CD4-positive, alpha-beta T cell (primary cell): ENCODE measurements at regions of chrX and their contacts with region 1.

Region 1: GRCh38 chrX:14029425-14030173 is at the start of gene GEMIN8:
- DNase-seq: peak; percentile 73 to 94 (median 84)
- ATAC-seq: peak; percentile 85
- H3K4me3 ChIP-seq: peak within 1 kb of the TSS; percentile 82
- H3K4me3 Mint-ChIP-seq: peak within 1 kb of the TSS; percentile 99
- H3K27ac ChIP-seq: peak within 1 kb of the TSS; percentile 82 to 93
- H3K27ac Mint-ChIP-seq: peak within 1 kb of the TSS; percentile 97
- H3K4me1 ChIP-seq: peaks cover 29% of the 10 kb centered on the region
- H3K4me1 Mint-ChIP-seq: peaks cover 52% of the 10 kb centered on the region
- H3K27me3 ChIP-seq: no peaks in the 10 kb centered on the region
- H3K27me3 Mint-ChIP-seq: no peaks in the 10 kb centered on the region
- CTCF ChIP-seq: no peak
- total RNA-seq, gene GEMIN8: 10.2 to 11.1 TPM

Region 2: GRCh38 chrX:12814420-12814819 is 1215.2 kb before region 1 on chrX:
- CTCF ChIA-PET with region 1: interaction called, 3 read pairs
- POLR2A ChIA-PET with region 1: no interaction called
- intact Hi-C with region 1: loop called in 1 of 2 experiments (anchors 5 kb)
- DNase-seq: peak in 13 of 14 experiments; percentile 5 to 67 (median 26)
- ATAC-seq: peak; percentile 63
- H3K4me3 ChIP-seq: no peak overlapping the region
- H3K4me3 Mint-ChIP-seq: no peak overlapping the region
- H3K27ac ChIP-seq: no peak overlapping the region
- H3K27ac Mint-ChIP-seq: no peak overlapping the region
- H3K4me1 ChIP-seq: no peaks in the 10 kb centered on the region
- H3K4me1 Mint-ChIP-seq: no peaks in the 10 kb centered on the region
- H3K27me3 ChIP-seq: no peaks in the 10 kb centered on the region
- H3K27me3 Mint-ChIP-seq: no peaks in the 10 kb centered on the region
- CTCF ChIP-seq: peak; percentile 29

Region 3: DNA sequence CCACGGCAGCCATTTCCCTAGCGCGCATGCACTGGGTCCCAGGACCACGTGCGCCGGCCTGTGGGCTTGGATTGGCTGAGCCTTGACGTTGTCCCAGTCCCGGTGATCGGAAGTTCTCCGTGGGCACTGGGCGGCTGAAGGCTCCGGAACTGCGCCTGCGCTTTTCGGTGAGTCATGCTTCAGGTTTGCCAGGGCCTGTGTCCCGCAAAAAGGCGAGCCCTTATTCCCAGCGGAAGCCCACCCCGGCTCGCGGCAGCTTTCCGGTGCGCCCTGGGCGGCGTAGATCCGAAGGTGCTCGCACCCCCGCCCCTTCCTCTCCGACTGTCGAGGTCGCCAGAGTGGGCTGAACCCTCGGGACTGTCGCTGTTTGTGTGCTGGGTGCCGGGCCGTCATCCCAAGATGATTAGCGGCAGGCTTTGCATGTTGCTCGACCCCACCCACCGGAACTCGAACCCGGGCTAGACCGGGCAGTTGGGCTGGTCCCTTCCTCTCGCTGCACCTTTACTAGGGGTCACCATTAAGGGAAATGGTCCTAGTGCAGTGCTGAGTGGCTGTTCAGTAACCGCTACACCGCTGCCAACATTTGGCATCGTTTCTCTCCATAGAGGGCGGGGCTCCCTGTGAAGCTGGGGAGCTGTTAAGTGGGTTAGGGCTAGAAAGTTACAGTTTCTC is 376.4 kb before region 1 on chrX and contains the start of gene TCEANC:
- CTCF ChIA-PET with region 1: no interaction called
- POLR2A ChIA-PET with region 1: interaction called, 13 read pairs
- intact Hi-C with region 1: loop called (anchors 2 kb)
- DNase-seq: peak; percentile 83 to 97 (median 93)
- ATAC-seq: peak; percentile 94
- H3K4me3 ChIP-seq: peak within 1 kb of the TSS; percentile 88
- H3K4me3 Mint-ChIP-seq: peak within 1 kb of the TSS; percentile 98
- H3K27ac ChIP-seq: peak within 1 kb of the TSS; percentile 90 to 93
- H3K27ac Mint-ChIP-seq: peak within 1 kb of the TSS; percentile 99
- H3K4me1 ChIP-seq: peaks cover 9% of the 10 kb centered on the region
- H3K4me1 Mint-ChIP-seq: peaks cover 18% of the 10 kb centered on the region
- H3K27me3 ChIP-seq: no peaks in the 10 kb centered on the region
- H3K27me3 Mint-ChIP-seq: no peaks in the 10 kb centered on the region
- CTCF ChIP-seq: no peak
- total RNA-seq, gene TCEANC: 6.5 to 8.3 TPM

Region 4: GRCh38 chrX:13734278-13735172 is 295.1 kb before region 1 on chrX and contains the starts of genes OFD1 and TRAPPC2:
- CTCF ChIA-PET with region 1: no interaction called
- POLR2A ChIA-PET with region 1: interaction called, 22 read pairs
- intact Hi-C with region 1: no loop called
- DNase-seq: peak; percentile 81 to 95 (median 87)
- ATAC-seq: peak; percentile 86
- H3K4me3 ChIP-seq: peak within 1 kb of the TSS; percentile 92
- H3K4me3 Mint-ChIP-seq: peak within 1 kb of the TSS; percentile 99
- H3K27ac ChIP-seq: peak within 1 kb of the TSS; percentile 96 to 99
- H3K27ac Mint-ChIP-seq: peak within 1 kb of the TSS; percentile 100
- H3K4me1 ChIP-seq: peaks cover 19% of the 10 kb centered on the region
- H3K4me1 Mint-ChIP-seq: peaks cover 56% of the 10 kb centered on the region
- H3K27me3 ChIP-seq: no peaks in the 10 kb centered on the region
- H3K27me3 Mint-ChIP-seq: no peaks in the 10 kb centered on the region
- CTCF ChIP-seq: no peak
- total RNA-seq, gene OFD1: 59.1 to 60.0 TPM
- total RNA-seq, gene TRAPPC2: 21.4 to 22.3 TPM

Region 5: DNA sequence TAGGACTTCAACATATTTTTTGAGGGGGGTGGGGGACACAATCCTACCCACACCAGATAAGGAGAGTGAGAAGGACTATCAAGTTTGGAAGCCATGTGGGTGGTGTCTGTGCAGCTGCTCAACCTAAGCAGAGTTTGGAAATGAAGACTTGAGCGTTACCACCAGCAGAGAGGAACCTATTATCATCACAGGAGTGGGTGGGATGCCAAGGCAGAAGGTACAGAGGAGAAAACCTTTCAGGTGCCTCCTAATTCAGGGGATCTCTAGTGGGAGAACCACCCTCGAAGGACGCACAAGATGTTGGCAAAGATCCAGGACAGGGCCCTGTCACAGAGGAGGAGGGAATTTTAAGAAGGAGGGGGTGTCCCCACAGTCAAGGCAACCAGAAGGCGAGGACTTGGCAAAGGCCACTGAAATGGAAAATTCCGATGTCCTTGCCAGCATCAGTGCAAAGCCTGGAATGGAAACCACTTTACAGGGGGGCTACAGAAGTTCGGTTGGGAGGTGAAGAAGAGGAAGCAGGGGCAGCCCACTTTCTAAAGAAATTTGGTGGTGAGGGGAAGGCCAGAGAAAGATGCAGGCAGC is 204.3 kb before region 1 on chrX:
- CTCF ChIA-PET with region 1: no interaction called
- POLR2A ChIA-PET with region 1: no interaction called
- intact Hi-C with region 1: no loop called
- DNase-seq: no peak
- ATAC-seq: no peak
- H3K4me3 ChIP-seq: no peak overlapping the region
- H3K4me3 Mint-ChIP-seq: no peak overlapping the region
- H3K27ac ChIP-seq: no peak overlapping the region
- H3K27ac Mint-ChIP-seq: no peak overlapping the region
- H3K4me1 ChIP-seq: no peaks in the 10 kb centered on the region
- H3K4me1 Mint-ChIP-seq: no peaks in the 10 kb centered on the region
- H3K27me3 ChIP-seq: no peaks in the 10 kb centered on the region
- H3K27me3 Mint-ChIP-seq: no peaks in the 10 kb centered on the region
- CTCF ChIP-seq: no peak

Region 6: DNA sequence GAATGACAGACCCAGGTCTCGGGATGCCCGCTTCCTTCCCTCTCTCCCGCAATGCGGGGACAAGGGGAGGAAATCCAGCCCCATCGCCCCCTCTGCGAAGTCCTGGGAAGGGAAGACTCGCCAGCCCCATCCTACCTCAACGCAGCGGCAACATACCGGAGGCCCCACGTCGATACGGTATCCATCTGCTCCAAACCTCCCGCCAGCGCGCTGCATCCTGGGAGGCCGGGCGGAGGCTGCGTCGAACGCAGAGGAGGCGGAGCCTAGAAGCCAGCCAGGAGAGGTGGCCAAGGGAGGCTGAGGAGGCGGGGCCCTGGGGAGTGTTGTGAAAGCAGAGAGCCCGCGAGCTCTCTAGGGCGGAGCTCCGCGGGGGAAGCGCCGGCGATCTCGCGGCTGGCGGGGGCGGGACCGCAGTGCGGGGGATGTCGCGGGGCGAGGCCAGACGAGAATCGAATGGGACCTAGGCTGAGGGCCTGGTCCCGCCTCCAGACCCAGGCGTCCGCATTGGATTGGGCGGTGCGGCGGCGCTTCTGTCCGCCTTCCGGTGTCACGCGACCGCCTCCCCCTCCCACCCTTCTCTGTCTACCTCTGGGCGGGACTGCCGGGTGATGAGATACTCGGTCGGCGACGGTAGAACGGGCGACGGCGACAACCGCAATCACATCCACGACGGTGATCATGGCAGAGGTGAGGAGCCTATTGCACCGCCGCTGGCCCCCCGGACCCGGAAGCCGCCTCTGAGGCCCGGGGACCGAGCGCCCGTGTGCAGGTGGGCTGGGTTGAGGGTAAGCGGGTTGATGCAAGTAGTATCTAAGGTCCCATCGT is 843.5 kb after region 1 on chrX and contains the starts of genes FANCB and MOSPD2:
- CTCF ChIA-PET with region 1: no interaction called
- POLR2A ChIA-PET with region 1: interaction called, 3 read pairs
- intact Hi-C with region 1: loop called in 1 of 2 experiments (anchors 5 kb)
- DNase-seq: peak; percentile 82 to 97 (median 92)
- ATAC-seq: peak; percentile 89
- H3K4me3 ChIP-seq: peak within 1 kb of the TSS; percentile 85
- H3K4me3 Mint-ChIP-seq: peak within 1 kb of the TSS; percentile 93
- H3K27ac ChIP-seq: peak within 1 kb of the TSS; percentile 71 to 72
- H3K27ac Mint-ChIP-seq: peak within 1 kb of the TSS; percentile 91
- H3K4me1 ChIP-seq: peaks cover 7% of the 10 kb centered on the region
- H3K4me1 Mint-ChIP-seq: peaks cover 8% of the 10 kb centered on the region
- H3K27me3 ChIP-seq: no peaks in the 10 kb centered on the region
- H3K27me3 Mint-ChIP-seq: no peaks in the 10 kb centered on the region
- CTCF ChIP-seq: no peak
- total RNA-seq, gene FANCB: 1.5 to 1.6 TPM
- total RNA-seq, gene MOSPD2: 6.4 to 6.8 TPM